ENCODE measurements at regions of chr13 and their contacts with region 1.

Region 1: DNA sequence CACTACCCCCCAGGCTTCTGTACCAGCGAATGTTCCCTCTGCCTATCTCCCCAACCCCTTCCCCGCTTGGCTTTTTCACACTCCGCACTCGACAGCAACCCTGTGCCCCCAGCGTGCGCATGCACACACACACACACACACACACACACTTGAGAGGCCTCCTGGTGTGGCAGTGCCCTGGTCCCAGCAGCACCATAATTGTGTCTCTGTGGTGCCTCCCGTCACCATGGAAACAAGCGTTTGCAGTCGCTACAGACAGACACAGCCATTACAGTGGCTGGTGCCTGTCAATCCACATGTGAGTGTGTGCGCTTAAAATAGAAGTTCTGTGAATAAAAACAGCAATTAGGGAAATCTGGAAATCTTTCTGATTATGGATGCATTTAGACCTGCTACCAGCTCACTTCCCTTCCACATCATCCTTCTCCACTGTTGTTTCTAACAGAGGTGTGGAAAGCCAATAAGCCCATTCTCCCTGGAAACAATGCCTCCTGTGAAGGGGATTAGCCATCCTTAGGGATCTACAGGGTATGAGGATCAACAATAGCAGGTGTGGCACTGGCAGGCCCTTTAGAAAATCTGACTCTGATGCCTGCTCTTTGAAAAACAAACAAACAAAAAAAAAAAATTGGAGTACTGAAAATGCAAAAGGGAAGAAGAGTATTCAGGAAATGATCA is 146.3 kb downstream of the DCLK1 start:
- DNase-seq: no peak
- ATAC-seq: no peak

Region 2: DNA sequence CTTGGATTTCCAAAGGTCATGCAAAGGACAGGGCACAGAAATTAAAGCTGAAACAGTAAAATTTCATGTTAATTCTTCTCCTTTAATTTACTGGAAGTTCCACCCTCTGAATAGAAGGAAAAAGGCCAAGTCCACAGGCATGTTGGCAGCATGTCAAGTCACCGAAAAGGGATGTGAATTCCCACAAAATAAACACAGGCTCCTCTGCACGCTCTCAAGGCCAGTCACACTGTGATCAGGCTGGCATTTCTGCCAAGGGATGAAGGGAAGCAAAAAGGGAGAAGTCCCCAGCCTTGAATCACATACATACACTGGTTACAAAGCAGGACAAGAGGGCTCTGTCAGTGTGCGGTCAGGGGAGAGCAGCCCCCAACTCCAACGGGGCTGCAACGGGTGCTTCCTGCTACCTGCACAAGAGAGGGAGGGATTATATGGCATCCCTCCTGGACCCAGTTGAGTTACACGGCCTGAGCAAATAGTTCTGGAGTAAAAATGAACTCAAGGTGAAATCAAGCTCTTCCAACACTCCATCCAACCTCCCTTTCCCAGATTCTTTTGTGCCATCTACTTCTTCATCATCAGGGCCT is 139.4 kb after region 1 on chr13:
- intact Hi-C with region 1: loop called (anchors 10 kb)
- DNase-seq: no peak
- ATAC-seq: peak; percentile 38